ENCODE measurements at regions of chr19 and their contacts with region 1.

Region 1: GRCh38 chr19:6372594-6373095 is at the start of gene ALKBH7:
- DNase-seq: peak; percentile 91
- ATAC-seq: peak; percentile 83
- H3K4me3 Mint-ChIP-seq: peak within 1 kb of the TSS; percentile 87
- H3K27ac Mint-ChIP-seq: peak within 1 kb of the TSS; percentile 94
- H3K4me1 Mint-ChIP-seq: peaks cover 15% of the 10 kb centered on the region
- H3K27me3 Mint-ChIP-seq: no peaks in the 10 kb centered on the region
- total RNA-seq, gene ALKBH7: 52.0 to 55.7 TPM

Region 2: GRCh38 chr19:5850743-5851293 is 521.8 kb before region 1 on chr19:
- POLR2A ChIA-PET with region 1: no interaction called
- DNase-seq: no peak
- ATAC-seq: no peak
- H3K4me3 Mint-ChIP-seq: no peak overlapping the region
- H3K27ac Mint-ChIP-seq: peak overlapping the region; percentile 3
- H3K4me1 Mint-ChIP-seq: peaks cover 8% of the 10 kb centered on the region
- H3K27me3 Mint-ChIP-seq: peaks cover 2% of the 10 kb centered on the region

Region 3: DNA sequence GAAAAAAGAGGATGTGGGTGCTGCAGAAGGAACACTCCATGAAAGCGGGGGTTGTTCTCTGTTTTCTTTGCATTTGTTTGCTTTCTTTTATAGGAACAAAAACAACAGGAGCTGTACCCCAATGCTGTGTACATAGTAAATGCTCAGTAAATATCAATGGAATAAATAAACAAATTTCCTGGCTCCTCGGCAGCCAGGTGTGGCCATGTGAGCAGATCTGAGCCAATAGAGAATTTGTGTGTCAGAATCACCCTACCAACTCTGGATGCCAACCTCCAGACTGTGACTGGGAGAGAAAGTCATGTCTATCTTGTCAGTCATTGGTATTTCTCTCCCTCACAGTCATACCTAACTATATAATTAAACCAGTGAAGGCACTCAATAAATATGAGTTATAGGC is 22.0 kb before region 1 on chr19:
- POLR2A ChIA-PET with region 1: no interaction called
- DNase-seq: no peak
- ATAC-seq: no peak
- H3K4me3 Mint-ChIP-seq: no peak overlapping the region
- H3K27ac Mint-ChIP-seq: no peak overlapping the region
- H3K4me1 Mint-ChIP-seq: no peaks in the 10 kb centered on the region
- H3K27me3 Mint-ChIP-seq: no peaks in the 10 kb centered on the region

Region 4: GRCh38 chr19:6362027-6362350 is 10.7 kb before region 1 on chr19:
- POLR2A ChIA-PET with region 1: interaction called, 40 read pairs
- DNase-seq: no peak
- ATAC-seq: peak; percentile 0
- H3K4me3 Mint-ChIP-seq: peak overlapping the region; percentile 100
- H3K27ac Mint-ChIP-seq: peak overlapping the region; percentile 99
- H3K4me1 Mint-ChIP-seq: peaks cover 14% of the 10 kb centered on the region
- H3K27me3 Mint-ChIP-seq: no peaks in the 10 kb centered on the region

Region 5: DNA sequence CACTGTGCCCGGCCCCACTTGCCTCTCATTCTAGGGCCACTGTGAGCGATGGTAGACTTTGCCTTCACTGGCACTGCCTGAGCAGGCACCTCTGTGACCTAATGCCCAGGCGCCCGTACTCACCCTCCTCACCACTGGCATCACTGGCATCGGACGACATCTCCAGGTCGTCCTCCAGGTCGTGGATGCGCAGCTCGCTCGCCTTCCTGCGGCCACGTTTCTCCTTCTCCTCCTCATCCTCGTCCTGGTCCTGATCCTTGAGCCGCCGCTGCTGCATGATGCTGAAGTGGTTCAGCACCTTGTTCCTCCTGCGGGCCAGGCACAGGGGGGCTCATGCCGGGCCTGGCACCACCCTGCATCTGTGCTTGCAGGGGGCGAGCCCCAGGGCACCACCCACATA is 10.5 kb after region 1 on chr19:
- POLR2A ChIA-PET with region 1: no interaction called
- DNase-seq: no peak
- ATAC-seq: no peak
- H3K4me3 Mint-ChIP-seq: no peak overlapping the region
- H3K27ac Mint-ChIP-seq: no peak overlapping the region
- H3K4me1 Mint-ChIP-seq: no peaks in the 10 kb centered on the region
- H3K27me3 Mint-ChIP-seq: no peaks in the 10 kb centered on the region

Region 6: GRCh38 chr19:6393074-6393983 is 20.7 kb after region 1 on chr19 and contains the start of gene GTF2F1:
- POLR2A ChIA-PET with region 1: interaction called, 14 read pairs
- DNase-seq: peak; percentile 95
- ATAC-seq: peak; percentile 81
- H3K4me3 Mint-ChIP-seq: peak within 1 kb of the TSS; percentile 97
- H3K27ac Mint-ChIP-seq: peak within 1 kb of the TSS; percentile 95
- H3K4me1 Mint-ChIP-seq: peaks cover 21% of the 10 kb centered on the region
- H3K27me3 Mint-ChIP-seq: no peaks in the 10 kb centered on the region
- total RNA-seq, gene GTF2F1: 67.3 to 72.8 TPM